H1 (cell line): ENCODE measurements at regions of chr2 and their contacts with region 1.

Region 1: DNA sequence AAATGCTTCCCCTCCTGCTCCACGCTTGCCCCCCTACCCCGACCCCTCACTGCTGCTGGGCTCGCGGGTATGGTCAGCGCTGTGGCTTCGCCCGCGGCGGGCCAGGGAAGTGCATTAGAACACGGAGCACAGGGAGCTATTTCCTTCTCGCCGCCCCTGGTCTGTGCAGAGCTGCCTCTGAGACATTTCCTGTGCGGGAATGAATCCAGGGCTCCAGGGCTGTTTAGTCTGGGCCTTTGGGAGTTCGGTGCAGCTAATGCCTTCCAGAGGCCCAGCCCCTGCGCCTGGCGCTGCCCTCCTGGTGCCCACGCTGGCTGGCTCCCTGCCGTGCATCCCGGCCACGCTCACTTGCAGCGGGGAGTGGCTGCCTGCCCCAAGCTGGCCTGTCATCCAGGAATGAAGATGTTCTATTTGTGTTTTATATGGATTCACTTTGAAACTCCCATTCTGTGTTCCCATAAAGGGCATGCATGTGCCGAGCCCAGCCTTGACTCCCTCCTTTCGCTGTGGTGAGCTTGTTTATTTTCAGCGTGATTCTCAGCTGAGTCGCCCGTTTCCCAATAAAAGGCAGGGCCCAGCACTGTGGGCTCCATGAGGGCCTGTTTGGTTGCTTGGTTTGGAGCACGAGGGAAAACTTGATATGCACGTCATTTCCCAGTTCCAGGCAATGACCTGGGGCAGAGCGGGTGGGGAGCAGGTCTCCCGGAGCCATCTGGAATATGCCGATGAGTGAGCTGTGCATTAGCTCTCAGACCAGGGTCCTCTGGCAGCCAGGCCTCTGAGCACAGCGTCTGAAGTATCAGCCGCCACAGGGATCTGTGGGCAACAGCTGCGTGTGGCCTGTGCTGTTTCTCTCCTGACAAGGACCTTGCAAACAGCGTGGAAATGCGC is 42.7 kb downstream of the SH3RF3 start:
- DNase-seq: no peak
- H3K4me3 ChIP-seq: no peak overlapping the region
- H3K27ac ChIP-seq: no peak overlapping the region
- H3K4me1 ChIP-seq: peaks cover 0 to 8% (median 4%) of the 10 kb centered on the region in 4 experiments; a peak in 3 of 7 replicates
- H3K27me3 ChIP-seq: no peaks in the 10 kb centered on the region
- CTCF ChIP-seq: no peak
- EP300 ChIP-seq: no peak
- POLR2A ChIP-seq: no peak
- RAD21 ChIP-seq: no peak

Region 2: DNA sequence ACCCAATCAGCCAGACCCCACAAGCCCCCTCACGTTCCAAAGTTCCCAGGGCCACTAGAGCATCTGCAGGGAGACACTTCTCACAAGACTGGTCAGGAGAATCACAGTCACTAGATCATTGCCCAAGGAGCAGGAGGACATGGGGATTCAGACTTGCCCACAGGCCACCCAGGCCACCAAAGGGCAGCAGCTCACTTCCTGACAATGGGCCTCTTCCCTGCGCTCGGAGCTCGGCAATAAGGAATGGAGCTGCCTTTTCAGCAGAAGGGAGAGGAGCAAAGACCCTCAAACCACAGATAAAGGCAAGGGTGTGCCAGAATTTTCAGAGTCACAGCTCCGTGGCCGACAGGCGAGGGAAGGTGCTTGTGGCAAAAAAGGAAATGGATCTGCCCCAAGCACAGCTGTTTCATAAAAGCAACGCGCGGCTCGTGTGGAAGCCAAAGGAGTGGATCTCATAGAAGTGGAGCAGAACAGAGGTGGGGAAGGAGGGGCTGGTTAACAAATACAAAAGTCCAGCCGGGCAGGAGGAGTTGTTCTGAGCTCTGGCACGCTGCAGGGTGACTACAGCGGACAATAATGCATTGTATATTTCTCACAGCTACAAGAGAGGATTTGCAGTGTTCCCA is 254.8 kb before region 1 on chr2:
- CTCF ChIA-PET with region 1: no interaction called
- POLR2A ChIA-PET with region 1: no interaction called
- DNase-seq: no peak
- H3K4me3 ChIP-seq: no peak overlapping the region
- H3K27ac ChIP-seq: no peak overlapping the region
- H3K4me1 ChIP-seq: no peaks in the 10 kb centered on the region
- H3K27me3 ChIP-seq: no peaks in the 10 kb centered on the region
- CTCF ChIP-seq: no peak
- EP300 ChIP-seq: no peak
- POLR2A ChIP-seq: no peak
- RAD21 ChIP-seq: no peak

Region 3: DNA sequence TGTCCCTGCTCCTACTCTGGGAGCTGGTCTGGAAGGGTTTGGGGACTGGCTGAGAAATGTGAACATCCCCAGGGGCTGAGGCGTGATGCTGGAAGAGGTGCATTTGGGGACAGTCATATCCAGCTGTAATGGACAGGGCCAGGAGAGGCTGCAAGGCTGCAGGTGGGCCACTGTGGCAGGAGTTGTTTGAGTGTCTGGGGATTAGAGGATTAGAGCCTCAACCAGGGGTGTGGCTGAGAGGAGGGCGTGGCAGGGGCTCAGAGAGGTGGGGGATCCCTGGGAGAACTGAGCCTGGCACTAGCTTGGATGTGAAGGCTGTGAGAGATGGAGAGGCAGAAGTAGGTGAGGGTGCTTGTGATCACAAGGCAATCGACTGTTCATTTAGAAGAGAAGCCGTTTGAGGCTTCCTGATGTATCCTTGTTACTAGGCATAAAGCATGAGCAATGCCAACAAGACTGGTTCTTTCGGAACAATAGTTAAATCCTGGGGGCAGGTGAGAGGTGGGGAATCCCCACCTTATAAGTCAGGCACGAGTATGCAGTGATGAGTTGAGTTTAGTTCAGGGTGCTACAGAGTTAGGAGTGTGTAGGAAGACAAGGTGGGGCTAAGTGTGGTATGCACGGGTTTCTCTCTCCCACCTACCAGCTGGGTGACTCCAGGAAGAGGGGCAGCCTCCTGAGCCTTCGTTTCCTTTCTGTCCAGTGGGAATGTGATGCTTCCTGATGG is 10.8 kb before region 1 on chr2:
- CTCF ChIA-PET with region 1: interaction called, 16 read pairs
- POLR2A ChIA-PET with region 1: no interaction called
- DNase-seq: no peak
- H3K4me3 ChIP-seq: no peak overlapping the region
- H3K27ac ChIP-seq: no peak overlapping the region
- H3K4me1 ChIP-seq: peaks cover 0 to 6% (median 0%) of the 10 kb centered on the region in 4 experiments; a peak in 1 of 7 replicates
- H3K27me3 ChIP-seq: no peaks in the 10 kb centered on the region
- CTCF ChIP-seq: no peak
- EP300 ChIP-seq: no peak
- POLR2A ChIP-seq: no peak
- RAD21 ChIP-seq: no peak